Mammary epithelial cell (primary cell): ENCODE measurements at regions of chr7 and their contacts with region 1.

Region 1: GRCh38 chr7:133434055-133434865 is 181.4 kb downstream of the EXOC4 start:
- DNase-seq: peak; percentile 8
- H3K4me3 ChIP-seq: no peak overlapping the region
- H3K27ac ChIP-seq: no peak overlapping the region
- H3K4me1 ChIP-seq: peaks cover 27% of the 10 kb centered on the region
- H3K27me3 ChIP-seq: no peaks in the 10 kb centered on the region
- CTCF ChIP-seq: peak; percentile 35 to 55

Region 2: DNA sequence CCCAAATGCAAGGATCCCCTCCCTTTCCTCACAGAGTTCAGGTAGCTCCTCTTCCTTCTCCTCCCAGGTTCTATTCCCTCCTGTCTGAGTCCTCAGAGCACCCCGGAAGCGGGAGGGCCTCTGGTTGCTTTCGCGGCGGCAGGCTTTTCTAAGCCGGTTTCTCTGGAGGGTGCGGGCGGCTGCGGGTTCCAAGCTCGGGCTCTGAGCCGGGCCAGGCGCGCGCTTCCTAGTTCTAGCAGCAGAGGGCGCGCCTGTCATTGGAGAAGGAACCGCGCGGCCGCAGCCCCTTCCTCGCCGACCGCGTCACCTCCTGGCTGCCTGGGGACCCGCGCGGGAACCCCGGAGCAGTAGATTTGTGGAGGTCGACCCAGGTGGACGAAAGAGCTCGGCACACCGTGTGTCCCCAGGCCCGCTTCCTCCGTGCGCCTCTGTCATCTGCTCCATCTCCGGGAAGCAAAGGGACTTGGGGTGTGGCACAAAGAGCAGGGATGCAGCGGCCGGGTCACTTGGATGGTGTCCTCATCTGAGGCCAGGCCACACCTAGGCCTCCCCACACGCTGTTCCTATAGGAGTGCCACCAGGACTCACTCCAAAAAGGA is 1488.8 kb before region 1 on chr7:
- CTCF ChIA-PET with region 1: no interaction called
- dilution Hi-C with region 1: no loop called
- in situ Hi-C with region 1: no loop called
- intact Hi-C with region 1: loop called (anchors 10 kb)
- DNase-seq: peak; percentile 12
- H3K4me3 ChIP-seq: no peak overlapping the region
- H3K27ac ChIP-seq: no peak overlapping the region
- H3K4me1 ChIP-seq: peaks cover 5% of the 10 kb centered on the region
- H3K27me3 ChIP-seq: no peaks in the 10 kb centered on the region
- CTCF ChIP-seq: peak; percentile 50 to 86

Region 3: DNA sequence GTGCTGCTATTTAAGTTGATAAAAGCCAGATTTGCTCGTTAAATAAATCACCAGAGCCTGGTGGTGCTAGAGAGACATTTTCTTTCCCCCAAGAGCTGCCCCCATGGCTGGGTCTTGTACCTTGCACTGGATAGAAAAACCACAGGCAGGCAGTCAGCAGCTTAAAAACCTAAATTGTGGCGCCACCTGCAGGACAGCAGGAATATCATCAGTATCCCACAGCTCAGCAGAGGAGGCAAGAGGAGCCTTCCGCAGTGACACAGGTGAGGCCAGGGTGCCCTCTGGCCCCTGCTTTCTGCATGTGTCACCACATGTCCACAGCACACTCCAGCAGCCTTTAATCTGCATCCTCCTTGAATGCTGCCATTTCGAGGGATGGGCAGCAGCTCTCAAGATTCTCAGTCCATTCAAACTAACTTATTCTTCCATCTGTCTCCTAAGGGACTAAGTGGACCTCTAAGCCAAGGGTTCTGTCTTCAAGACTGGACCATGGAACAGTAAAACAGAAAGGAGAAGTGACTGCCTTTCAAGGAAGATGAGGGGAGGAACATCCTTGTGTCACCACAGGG is 853.5 kb before region 1 on chr7:
- CTCF ChIA-PET with region 1: no interaction called
- dilution Hi-C with region 1: no loop called
- in situ Hi-C with region 1: no loop called
- intact Hi-C with region 1: loop called (anchors 1 kb)
- DNase-seq: peak; percentile 39
- H3K4me3 ChIP-seq: no peak overlapping the region
- H3K27ac ChIP-seq: no peak overlapping the region
- H3K4me1 ChIP-seq: peaks cover 6% of the 10 kb centered on the region
- H3K27me3 ChIP-seq: peaks cover 23% of the 10 kb centered on the region
- CTCF ChIP-seq: peak; percentile 62 to 76

Region 4: DNA sequence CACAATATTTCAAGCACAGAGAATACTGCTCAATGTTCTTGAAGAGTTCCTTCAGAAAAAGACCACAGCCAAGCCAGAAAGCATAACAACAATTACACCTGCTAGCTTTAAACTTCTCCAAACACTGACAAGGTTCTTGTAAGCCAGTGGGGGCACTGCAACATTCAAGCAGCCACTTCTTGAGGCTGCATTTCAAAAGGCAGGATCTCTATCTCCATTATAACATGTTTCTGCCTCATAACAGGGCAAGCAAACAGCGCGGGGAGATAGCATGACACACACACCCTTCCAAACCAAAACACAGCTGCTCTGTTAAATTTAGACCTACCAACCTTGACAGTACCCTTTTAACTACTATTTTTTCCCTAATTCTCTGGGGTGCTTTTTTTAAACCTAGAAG is 383.2 kb before region 1 on chr7:
- CTCF ChIA-PET with region 1: no interaction called
- dilution Hi-C with region 1: no loop called
- in situ Hi-C with region 1: no loop called
- intact Hi-C with region 1: loop called (anchors 5 kb)
- DNase-seq: no peak
- H3K4me3 ChIP-seq: no peak overlapping the region
- H3K27ac ChIP-seq: no peak overlapping the region
- H3K4me1 ChIP-seq: peaks cover 35% of the 10 kb centered on the region
- H3K27me3 ChIP-seq: no peaks in the 10 kb centered on the region
- CTCF ChIP-seq: peak in 1 of 2 donors; percentile 28

Region 5: DNA sequence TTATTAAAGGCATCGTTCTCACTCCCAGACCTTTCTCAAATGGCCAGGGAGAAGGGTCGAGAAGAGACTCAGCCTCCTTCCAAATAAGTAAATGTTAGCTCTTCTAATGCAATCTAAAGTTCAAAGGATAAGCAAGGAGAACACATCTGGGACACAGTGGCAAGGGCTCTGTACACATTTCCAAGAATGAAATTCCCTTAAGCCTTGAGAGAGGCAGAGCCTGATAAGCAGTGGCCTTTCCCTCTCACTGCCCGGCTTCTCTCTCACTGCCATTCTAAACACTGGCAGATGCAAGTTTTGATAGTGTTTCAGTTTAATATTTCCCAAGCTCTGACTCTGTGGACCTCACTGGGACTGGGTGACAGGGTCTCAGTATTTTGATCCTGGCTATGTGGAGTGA is 216.5 kb before region 1 on chr7:
- CTCF ChIA-PET with region 1: no interaction called
- dilution Hi-C with region 1: no loop called
- in situ Hi-C with region 1: no loop called
- intact Hi-C with region 1: no loop called
- DNase-seq: no peak
- H3K4me3 ChIP-seq: no peak overlapping the region
- H3K27ac ChIP-seq: no peak overlapping the region
- H3K4me1 ChIP-seq: no peaks in the 10 kb centered on the region
- H3K27me3 ChIP-seq: no peaks in the 10 kb centered on the region
- CTCF ChIP-seq: no peak

Region 6: DNA sequence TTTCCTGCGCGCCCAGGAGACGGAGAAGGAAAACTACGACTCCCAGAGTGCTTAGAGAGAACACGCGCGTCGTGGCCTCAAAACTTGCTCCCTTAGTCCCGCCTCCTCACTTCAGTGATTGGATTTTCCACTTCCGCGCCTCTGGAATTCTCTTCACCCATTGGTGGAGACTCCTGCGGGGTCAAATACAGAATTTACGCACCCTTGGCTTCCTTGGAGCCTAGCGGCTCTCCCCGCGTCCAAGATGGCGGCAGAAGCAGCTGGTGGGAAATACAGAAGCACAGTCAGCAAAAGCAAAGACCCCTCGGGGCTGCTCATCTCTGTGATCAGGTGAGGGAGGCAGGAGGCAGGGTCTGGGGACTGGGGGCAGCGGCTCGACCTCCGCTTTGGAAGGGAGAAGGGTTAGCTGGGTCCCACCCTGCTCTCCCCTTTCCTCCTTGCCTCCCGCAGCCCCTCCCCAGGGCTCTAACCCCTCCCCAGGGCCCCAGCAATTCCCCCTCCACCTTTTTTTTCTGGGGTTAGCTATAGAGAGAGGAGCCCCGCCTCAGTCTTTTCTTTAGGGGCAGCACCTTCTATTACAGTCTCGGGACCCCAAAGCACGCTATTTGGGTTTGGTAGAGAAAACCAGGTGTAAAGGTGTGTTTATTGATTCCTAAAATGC is 181.3 kb before region 1 on chr7 and contains the start of gene EXOC4:
- CTCF ChIA-PET with region 1: no interaction called
- dilution Hi-C with region 1: no loop called
- in situ Hi-C with region 1: no loop called
- intact Hi-C with region 1: loop called (anchors 5 kb)
- DNase-seq: peak; percentile 96
- H3K4me3 ChIP-seq: peak within 1 kb of the TSS; percentile 88 to 97 (median 91)
- H3K27ac ChIP-seq: peak within 1 kb of the TSS; percentile 69
- H3K4me1 ChIP-seq: peaks cover 4% of the 10 kb centered on the region
- H3K27me3 ChIP-seq: no peaks in the 10 kb centered on the region
- CTCF ChIP-seq: no peak
- total RNA-seq, gene EXOC4: 90.4 to 91.7 TPM

Region 7: DNA sequence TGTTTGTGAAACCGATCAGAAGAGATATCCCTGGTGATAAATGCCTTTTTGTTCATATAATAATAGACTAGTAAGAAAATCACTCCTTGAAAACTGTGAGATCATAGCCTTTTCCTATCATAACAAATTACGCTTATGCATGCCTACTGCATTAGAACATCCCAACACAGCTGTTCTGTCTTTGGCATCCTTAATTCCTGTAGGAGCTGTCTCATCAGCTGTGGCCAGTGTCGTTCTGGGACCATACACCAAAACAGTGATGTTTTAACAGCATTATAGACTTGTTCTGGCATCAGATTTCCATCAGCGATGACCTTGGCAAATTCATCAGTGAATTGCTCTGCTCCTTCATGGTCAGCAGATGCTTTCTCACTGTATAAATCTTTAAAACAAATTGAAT is 269.3 kb after region 1 on chr7:
- CTCF ChIA-PET with region 1: no interaction called
- dilution Hi-C with region 1: no loop called
- in situ Hi-C with region 1: no loop called
- intact Hi-C with region 1: loop called (anchors 10 kb)
- DNase-seq: peak; percentile 54
- H3K4me3 ChIP-seq: no peak overlapping the region
- H3K27ac ChIP-seq: no peak overlapping the region
- H3K4me1 ChIP-seq: peaks cover 25% of the 10 kb centered on the region
- H3K27me3 ChIP-seq: no peaks in the 10 kb centered on the region
- CTCF ChIP-seq: no peak

Region 8: DNA sequence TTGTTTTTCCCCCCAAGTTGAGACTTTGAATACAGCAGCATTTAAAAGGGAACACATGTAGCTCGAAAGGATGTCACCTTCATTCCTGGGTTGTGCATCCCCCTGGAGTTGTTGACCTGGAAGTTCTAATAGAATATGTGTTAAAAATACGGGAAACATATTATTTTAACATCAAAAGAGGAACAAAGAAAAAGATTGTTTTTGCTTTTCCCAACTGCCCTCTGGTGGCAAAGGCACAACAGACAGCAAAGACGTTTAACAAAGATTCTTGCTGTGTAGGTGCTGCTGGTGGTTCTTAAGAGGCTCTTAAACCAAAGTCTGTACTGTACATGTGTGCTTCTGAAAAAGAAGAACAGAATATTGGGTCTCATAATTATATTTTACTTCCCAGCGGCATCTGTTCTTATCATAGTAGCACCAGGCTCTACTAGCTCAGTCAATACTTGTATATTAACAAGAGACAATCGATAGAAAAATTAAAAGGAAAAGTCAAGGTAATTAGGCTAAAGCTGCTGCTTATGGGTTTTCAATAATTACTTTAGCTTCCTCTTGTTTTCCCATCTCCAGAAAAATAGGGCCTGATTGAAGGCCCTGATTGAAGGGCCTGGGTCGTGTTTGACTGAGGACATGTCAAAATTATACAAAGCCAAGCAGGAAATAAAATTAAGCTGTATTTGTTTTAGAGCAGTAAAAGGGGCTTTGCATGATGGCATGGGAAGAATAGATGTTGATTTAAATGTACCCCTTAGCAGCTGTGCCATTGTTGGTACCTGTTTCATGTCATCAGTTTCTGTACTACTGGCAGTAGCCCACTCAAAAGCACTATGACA is 308.7 kb after region 1 on chr7:
- CTCF ChIA-PET with region 1: interaction called, 4 read pairs
- dilution Hi-C with region 1: no loop called
- in situ Hi-C with region 1: no loop called
- intact Hi-C with region 1: loop called (anchors 5 kb)
- DNase-seq: peak; percentile 16
- H3K4me3 ChIP-seq: no peak overlapping the region
- H3K27ac ChIP-seq: no peak overlapping the region
- H3K4me1 ChIP-seq: peaks cover 14% of the 10 kb centered on the region
- H3K27me3 ChIP-seq: no peaks in the 10 kb centered on the region
- CTCF ChIP-seq: peak; percentile 53 to 63